Gastrocnemius medialis (tissue), 4 donors: ENCODE measurements at regions of chr11 and their contacts with region 1.

Region 1: GRCh38 chr11:113796663-113797259 is 17.2 kb downstream of the CLDN25 start:
- DNase-seq: no peak
- ATAC-seq: peak; percentile 96 to 99
- H3K4me3 ChIP-seq: no peak overlapping the region
- H3K27ac ChIP-seq: peak overlapping the region in 2 of 4 donors; percentile 21 to 48
- H3K4me1 ChIP-seq: peaks cover 0 to 5% of the 10 kb centered on the region in 2 donors
- H3K27me3 ChIP-seq: no peaks in the 10 kb centered on the region
- CTCF ChIP-seq: peak; percentile 57 to 75 (median 65)
- POLR2A ChIP-seq: no peak

Region 2: GRCh38 chr11:113773416-113774173 is 23.2 kb before region 1 on chr11 and contains the start of gene ZW10:
- in situ Hi-C with region 1: no loop called
- intact Hi-C with region 1: loop called (anchors 2 kb)
- DNase-seq: peak; percentile 95 to 97
- ATAC-seq: peak; percentile 83 to 88
- H3K4me3 ChIP-seq: peak within 1 kb of the TSS; percentile 81 to 100 (median 84)
- H3K27ac ChIP-seq: peak within 1 kb of the TSS; percentile 86 to 97 (median 90)
- H3K4me1 ChIP-seq: peaks cover 15 to 18% of the 10 kb centered on the region in 2 donors
- H3K27me3 ChIP-seq: no peaks in the 10 kb centered on the region
- CTCF ChIP-seq: peak; percentile 70 to 83 (median 82)
- POLR2A ChIP-seq: peak; percentile 51 to 69
- total RNA-seq, gene ZW10: 17.3 to 24.3 (median 20.2) TPM